RWPE1 (cell line): ENCODE measurements at regions of chr2 and their contacts with region 1.

Region 1: GRCh38 chr2:232994446-232994845 is 18.6 kb downstream of the NGEF start:
- DNase-seq: no peak
- H3K27ac ChIP-seq: peak overlapping the region; percentile 37
- CTCF ChIP-seq: no peak

Region 2: GRCh38 chr2:233363744-233364235 is 369.3 kb after region 1 on chr2:
- CTCF ChIA-PET with region 1: interaction called, 10 read pairs
- POLR2A ChIA-PET with region 1: no interaction called
- DNase-seq: no peak
- H3K27ac ChIP-seq: no peak overlapping the region
- CTCF ChIP-seq: no peak